HEK293T (cell line): ENCODE measurements at regions of chr11 and their contacts with region 1.

Region 1: DNA sequence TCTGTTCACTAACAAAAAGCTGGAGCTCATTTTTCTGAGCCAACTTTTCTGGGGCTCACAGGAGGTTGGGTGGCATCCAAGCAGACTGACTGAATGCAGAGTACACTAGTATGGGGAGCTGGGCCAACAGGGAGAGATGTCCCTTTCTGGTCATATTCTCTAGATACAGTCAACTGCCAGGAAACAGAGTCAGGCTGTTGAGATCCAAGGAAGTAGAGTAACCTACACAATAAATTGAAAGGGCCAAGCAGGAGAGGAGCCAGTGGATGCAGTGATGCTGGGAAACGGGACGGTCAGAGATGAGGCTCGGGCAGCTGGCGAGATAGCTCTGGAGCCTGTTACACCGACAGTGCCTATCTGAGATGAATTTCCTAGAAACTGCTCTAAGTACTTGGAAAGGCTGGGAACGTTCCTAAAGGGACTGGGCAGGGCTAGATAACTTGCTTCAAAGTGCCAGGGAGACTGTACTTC is 71.1 kb downstream of the LARGE2 start:
- DNase-seq: no peak

Region 2: DNA sequence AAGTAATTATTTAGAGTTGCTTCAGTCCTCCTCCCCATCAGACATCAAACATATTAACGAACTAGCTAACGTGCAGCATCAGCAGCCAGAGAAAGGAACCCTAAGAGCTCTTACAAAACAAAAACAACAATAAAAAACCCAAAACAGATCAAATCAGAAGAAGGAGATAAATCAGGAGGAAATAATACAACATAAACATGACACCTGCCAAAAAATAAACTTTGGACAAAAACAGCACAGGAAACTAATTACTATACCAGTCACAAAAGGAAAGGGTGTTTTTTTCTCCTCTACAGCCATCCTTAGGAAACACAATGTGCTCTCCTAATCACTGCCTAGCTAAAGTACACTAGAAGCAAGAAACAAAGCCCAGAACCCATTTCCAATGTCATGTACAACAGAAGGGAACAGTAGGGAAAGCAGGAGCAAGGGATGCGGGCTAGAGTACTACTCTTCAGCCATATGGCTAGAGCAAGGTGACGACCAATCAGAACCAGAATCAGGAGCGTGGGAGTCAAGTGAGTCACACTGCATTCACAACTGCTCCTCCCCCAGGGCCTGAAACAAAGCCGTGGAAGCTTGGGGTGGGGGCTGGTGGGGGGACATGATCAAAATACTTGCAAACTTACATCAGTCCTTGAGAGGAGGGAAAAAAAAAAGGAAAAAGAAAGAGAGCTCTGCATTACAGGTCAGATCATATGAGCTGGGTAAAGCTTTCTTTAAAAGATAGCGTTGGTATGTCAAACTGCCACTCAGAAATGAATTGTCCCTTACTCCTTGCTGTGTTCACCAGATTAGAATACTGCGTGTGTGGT is 10.7 kb before region 1 on chr11:
- CTCF ChIA-PET with region 1: interaction called, 11 read pairs
- POLR2A ChIA-PET with region 1: interaction called, 13 read pairs
- DNase-seq: peak; percentile 65

Region 3: DNA sequence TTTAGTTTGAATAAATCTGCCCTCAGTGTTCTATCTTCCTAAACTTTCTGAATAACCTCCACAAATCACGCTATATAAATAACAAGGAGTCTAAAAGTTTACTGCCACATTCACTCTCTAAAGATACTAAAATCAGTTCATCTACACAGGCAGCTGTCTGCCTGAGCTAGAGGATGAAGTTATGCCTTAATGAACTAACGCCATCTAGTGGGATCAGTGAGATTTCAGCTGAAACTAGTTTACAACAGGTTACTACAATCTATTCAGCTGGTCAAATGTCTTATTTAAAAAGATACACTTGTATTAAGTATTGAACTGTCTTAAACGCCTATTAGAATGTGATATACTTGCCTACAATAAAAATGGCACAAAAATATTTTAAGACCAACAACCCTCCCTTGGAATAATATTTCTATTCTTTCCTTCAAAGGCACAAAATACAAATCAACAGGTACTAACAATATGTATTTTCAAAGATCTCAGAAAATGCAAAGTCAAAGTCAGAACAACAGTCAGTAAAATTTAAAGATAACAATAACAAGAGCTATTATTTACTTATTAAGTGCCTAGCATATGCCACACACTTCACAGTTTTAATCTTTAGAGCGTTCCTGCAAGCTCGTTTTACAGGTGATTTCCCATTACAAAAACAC is 13.0 kb after region 1 on chr11:
- CTCF ChIA-PET with region 1: interaction called, 11 read pairs
- POLR2A ChIA-PET with region 1: interaction called, 3 read pairs
- DNase-seq: peak; percentile 67

Region 4: GRCh38 chr11:46149342-46149741 is 155.8 kb after region 1 on chr11:
- CTCF ChIA-PET with region 1: no interaction called
- POLR2A ChIA-PET with region 1: no interaction called
- DNase-seq: no peak